Ovary (tissue), 10 donors: ENCODE measurements at regions of chr15 and their contacts with region 1.

Region 1: DNA sequence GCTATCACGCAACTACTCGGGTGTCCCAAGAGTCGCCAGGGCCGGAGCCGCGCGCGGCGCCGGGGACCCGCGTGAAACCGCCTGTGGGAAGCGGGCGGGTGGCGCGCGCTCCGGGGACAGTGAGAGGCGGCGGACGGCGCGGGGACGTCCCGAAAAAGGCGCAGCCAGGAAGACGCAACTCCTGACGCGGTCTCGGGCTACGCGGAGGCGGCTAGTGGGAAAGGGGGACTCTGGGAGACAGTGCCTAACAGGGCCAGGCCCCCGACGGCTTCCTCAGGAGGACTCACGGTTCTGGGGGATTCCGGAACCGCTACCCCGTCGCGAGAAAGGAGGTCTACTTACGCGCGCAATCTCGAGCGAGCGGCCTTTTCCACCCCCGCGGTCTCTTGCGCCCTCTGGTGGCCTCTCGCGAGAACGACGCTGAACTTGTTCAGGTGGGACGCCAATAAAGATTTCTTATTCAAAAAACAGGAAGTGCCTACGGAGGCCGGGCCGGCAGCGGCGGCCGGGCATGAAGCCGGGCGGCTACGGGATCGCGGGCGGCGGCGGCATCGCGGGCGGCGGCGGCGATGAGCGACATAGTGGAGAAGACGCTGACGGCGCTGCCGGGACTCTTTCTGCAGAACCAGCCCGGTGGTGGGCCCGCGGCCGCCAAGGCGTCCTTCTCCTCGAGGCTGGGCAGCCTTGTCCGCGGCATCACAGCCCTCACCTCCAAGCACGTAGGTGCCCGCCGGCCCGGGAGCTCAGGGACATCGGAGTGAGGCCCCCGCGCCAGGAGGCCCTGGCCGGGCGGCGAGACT is at the start of gene AP4E1:
- DNase-seq: peak; percentile 88 to 95 (median 93)
- H3K4me3 ChIP-seq: peak within 1 kb of the TSS; percentile 73
- H3K27ac ChIP-seq: peak within 1 kb of the TSS; percentile 77 to 86
- H3K4me1 ChIP-seq: peaks cover 7% of the 10 kb centered on the region
- H3K27me3 ChIP-seq: no peaks in the 10 kb centered on the region
- CTCF ChIP-seq: peak; percentile 96 to 98 (median 97)
- EP300 ChIP-seq: no peak
- POLR2A ChIP-seq: peak; percentile 62
- total RNA-seq, gene AP4E1: 3.7 to 12.7 (median 8.6) TPM

Region 2: DNA sequence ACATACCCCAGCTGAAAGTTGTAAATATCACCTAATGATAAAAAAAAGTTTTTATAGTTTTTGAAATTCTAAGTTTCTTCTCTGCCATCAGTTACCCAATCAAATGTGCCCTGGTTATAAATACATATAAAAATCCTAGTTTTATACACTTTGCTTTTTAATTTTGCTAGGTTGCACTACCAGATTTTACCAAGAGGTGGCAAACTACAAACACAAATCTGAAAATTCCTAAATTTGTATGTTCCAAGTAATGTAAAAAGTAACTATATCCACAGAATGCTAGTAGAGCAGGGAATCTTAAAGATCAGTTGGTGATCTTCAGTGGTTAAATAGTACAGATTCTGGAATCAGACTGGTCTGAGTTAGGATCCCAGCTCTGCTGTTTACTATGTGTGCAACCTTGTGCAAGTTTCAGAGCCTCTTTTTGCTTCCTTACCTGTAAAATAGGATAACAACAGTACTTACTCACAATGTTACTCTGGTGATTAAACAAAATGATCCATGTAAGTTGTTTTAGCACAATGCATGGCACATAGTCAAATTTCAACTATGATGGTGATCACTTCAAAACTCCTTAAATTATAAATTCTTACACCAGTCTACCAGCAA is 232.8 kb before region 1 on chr15:
- intact Hi-C with region 1: loop called in 2 of 4 experiments (anchors 5 to 10 kb)
- DNase-seq: no peak
- H3K4me3 ChIP-seq: no peak overlapping the region
- H3K27ac ChIP-seq: no peak overlapping the region
- H3K4me1 ChIP-seq: peaks cover 1% of the 10 kb centered on the region
- H3K27me3 ChIP-seq: no peaks in the 10 kb centered on the region
- CTCF ChIP-seq: peak; percentile 43 to 70 (median 60)
- EP300 ChIP-seq: no peak
- POLR2A ChIP-seq: no peak

Region 3: DNA sequence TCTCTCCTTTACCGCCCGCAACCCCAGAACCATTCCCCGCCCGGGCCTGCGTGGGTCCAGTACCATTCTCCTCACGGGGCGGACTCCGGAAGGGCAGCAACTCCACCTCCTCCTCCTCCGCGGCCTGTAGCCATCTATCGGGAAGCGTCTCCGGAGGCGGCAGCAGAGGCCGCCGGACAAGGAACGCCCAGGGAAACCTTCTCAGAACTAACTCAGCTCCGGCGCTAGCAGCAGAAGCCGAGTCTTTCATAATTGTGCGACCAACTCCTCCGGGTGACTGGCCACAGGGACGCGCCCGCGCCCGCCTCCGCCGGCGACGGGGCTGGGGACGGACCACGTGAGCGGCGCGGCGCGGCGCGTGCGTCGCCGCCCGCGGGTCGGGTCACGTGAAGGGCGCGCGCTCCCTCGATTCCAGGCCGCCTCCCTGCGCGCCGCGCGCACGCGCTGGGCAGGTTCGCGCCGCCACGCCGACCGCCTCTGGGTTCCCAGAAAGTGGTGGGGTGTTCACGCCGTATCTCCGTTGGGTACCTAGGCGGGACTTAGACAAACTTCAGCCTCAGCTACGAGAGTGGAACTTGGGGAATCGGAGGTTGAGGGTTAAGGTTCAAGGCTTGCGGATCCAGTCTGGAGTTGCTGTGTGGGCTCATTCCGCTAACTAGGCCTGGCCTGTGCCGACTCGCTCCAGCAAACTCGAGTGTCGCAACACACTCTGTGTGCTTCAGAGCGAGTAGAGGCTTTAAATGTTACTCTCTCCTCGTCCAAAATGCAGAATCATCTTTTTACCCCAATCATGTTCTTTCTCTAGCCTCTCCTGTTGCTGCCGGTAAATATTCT is 221.7 kb before region 1 on chr15 and contains the start of gene TRPM7:
- intact Hi-C with region 1: loop called in 1 of 4 experiments (anchors 10 kb)
- DNase-seq: peak; percentile 87 to 93 (median 90)
- H3K4me3 ChIP-seq: peak within 1 kb of the TSS; percentile 73
- H3K27ac ChIP-seq: peak within 1 kb of the TSS; percentile 70 to 94
- H3K4me1 ChIP-seq: no peaks in the 10 kb centered on the region
- H3K27me3 ChIP-seq: no peaks in the 10 kb centered on the region
- CTCF ChIP-seq: no peak
- EP300 ChIP-seq: peak; percentile 58
- POLR2A ChIP-seq: peak; percentile 77
- total RNA-seq, gene TRPM7: 25.2 to 57.2 (median 43.5) TPM